ENCODE measurements at regions of chr2 and their contacts with region 1.

Region 1: DNA sequence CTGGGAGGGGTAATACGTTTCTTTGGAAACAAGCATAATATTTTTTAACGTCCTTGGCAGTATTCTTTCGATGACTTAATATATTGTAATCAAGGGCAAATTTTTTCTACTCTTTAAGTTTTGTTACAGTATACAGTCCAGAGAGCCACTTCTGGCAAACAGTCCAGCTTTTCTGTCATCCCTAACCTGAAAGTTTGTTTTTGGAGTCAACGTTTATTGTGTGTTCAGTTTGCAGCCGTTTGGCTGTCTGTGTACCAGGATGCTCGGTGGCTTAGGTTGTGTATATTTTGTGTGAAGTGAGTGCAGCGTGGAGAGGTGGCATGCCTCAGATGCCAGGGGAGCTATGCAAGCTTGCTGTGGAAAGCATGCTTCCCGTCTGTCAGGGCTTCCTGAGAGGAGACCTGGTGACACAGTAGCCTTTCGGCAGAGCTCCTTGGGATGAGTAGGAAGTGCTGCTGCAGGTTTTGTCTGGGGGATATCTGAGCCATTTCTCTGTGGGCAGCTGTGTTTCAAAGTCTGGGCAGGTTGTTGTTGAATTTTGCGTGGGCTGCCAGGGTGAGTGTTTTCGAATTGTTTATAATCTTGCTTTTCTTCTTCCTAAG is 14.7 kb downstream of the MAP3K20 start:
- DNase-seq: no peak
- ATAC-seq: no peak
- H3K4me3 Mint-ChIP-seq: no peak overlapping the region
- H3K27ac Mint-ChIP-seq: no peak overlapping the region
- H3K4me1 Mint-ChIP-seq: no peaks in the 10 kb centered on the region
- H3K27me3 Mint-ChIP-seq: peaks cover 6% of the 10 kb centered on the region
- CTCF ChIP-seq: no peak

Region 2: GRCh38 chr2:173205375-173205774 is 115.0 kb after region 1 on chr2:
- CTCF ChIA-PET with region 1: interaction called, 18 read pairs
- POLR2A ChIA-PET with region 1: no interaction called
- intact Hi-C with region 1: loop called (anchors 10 kb)
- DNase-seq: no peak
- ATAC-seq: no peak
- H3K4me3 Mint-ChIP-seq: no peak overlapping the region
- H3K27ac Mint-ChIP-seq: no peak overlapping the region
- H3K4me1 Mint-ChIP-seq: peaks cover 2% of the 10 kb centered on the region
- H3K27me3 Mint-ChIP-seq: no peaks in the 10 kb centered on the region
- CTCF ChIP-seq: no peak